ENCODE measurements at regions of chr6 and their contacts with region 1.

Region 1: GRCh38 chr6:1686117-1687098 is 76.7 kb downstream of the FOXC1 start:
- DNase-seq: peak in 1 of 2 donors; percentile 23
- ATAC-seq: peak; percentile 66 to 90 (median 79)
- H3K4me3 ChIP-seq: no peak overlapping the region
- H3K27ac ChIP-seq: peak overlapping the region; percentile 47
- H3K4me1 ChIP-seq: peaks cover 9% of the 10 kb centered on the region
- H3K27me3 ChIP-seq: no peaks in the 10 kb centered on the region
- CTCF ChIP-seq: peak; percentile 24

Region 2: GRCh38 chr6:1624851-1625781 is 61.3 kb before region 1 on chr6:
- intact Hi-C with region 1: loop called in 1 of 2 experiments (anchors 5 kb)
- DNase-seq: peak; percentile 56 to 58
- ATAC-seq: peak; percentile 64 to 87 (median 73)
- H3K4me3 ChIP-seq: peak overlapping the region; percentile 78
- H3K27ac ChIP-seq: peak overlapping the region; percentile 14
- H3K4me1 ChIP-seq: peaks cover 8% of the 10 kb centered on the region
- H3K27me3 ChIP-seq: peaks cover 0 to 91% (median 30%) of the 10 kb centered on the region in 3 donors
- CTCF ChIP-seq: no peak

Measured in psoas muscle (tissue), 8 donors.